ENCODE measurements at regions of chr10 and their contacts with region 1.

Region 1: GRCh38 chr10:36236931-36237330 is 594.8 kb upstream of the FZD8 start:
- DNase-seq: no peak
- ATAC-seq: peak; percentile 31; the same call in 1 of the 2 replicates
- H3K4me3 ChIP-seq: no peak overlapping the region
- H3K27ac ChIP-seq: no peak overlapping the region
- H3K4me1 ChIP-seq: no peaks in the 10 kb centered on the region
- H3K27me3 ChIP-seq: no peaks in the 10 kb centered on the region
- CTCF ChIP-seq: no peak

Region 2: DNA sequence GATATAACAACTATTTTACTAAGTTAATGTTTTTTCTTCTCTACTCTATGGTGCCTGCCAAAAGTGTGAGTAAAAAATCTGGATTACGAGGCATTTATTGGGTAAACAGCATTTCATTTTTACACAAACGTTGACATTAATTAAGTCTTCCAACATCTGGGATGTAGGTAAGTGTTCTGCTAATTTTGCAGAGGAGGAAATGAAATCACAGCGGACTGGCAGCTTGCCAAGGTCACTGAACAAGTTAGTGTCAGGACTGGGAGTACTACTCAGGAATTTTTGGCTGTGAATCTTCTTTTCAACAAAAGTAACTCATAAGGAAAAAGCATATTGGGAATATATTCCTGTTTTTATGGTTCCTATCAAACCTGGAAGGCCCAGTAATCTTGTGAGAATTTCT is 17.3 kb after region 1 on chr10:
- CTCF ChIA-PET with region 1: no interaction called
- POLR2A ChIA-PET with region 1: no interaction called
- intact Hi-C with region 1: loop called (anchors 1 kb)
- DNase-seq: peak; percentile 75
- ATAC-seq: peak; percentile 25
- H3K4me3 ChIP-seq: no peak overlapping the region
- H3K27ac ChIP-seq: no peak overlapping the region
- H3K4me1 ChIP-seq: peaks cover 21% of the 10 kb centered on the region
- H3K27me3 ChIP-seq: no peaks in the 10 kb centered on the region
- CTCF ChIP-seq: no peak

Measured in PC-3 (cell line).